ENCODE measurements at regions of chr3 and their contacts with region 1.

Region 1: GRCh38 chr3:23565041-23565775 is 240.5 kb upstream of the UBE2E1 start:
- DNase-seq: peak; percentile 44
- ATAC-seq: peak; percentile 47
- H3K4me3 ChIP-seq: no peak overlapping the region
- H3K27ac ChIP-seq: 0 out of 2 replicates have a peak overlapping the region, but pooled peaks have one; percentile 3
- H3K4me1 ChIP-seq: peaks cover 25% of the 10 kb centered on the region
- H3K27me3 ChIP-seq: no peaks in the 10 kb centered on the region
- CTCF ChIP-seq: no peak

Region 2: GRCh38 chr3:21839592-21839991 is 1725.6 kb before region 1 on chr3:
- CTCF ChIA-PET with region 1: no interaction called
- POLR2A ChIA-PET with region 1: no interaction called
- intact Hi-C with region 1: no loop called
- DNase-seq: peak; percentile 68
- ATAC-seq: 0 out of 2 replicates have a peak, but pooled peaks have one; percentile 18
- H3K4me3 ChIP-seq: no peak overlapping the region
- H3K27ac ChIP-seq: no peak overlapping the region
- H3K4me1 ChIP-seq: peaks cover 9% of the 10 kb centered on the region; the same call in 1 of the 2 replicates
- H3K27me3 ChIP-seq: no peaks in the 10 kb centered on the region
- CTCF ChIP-seq: peak; percentile 71

Region 3: DNA sequence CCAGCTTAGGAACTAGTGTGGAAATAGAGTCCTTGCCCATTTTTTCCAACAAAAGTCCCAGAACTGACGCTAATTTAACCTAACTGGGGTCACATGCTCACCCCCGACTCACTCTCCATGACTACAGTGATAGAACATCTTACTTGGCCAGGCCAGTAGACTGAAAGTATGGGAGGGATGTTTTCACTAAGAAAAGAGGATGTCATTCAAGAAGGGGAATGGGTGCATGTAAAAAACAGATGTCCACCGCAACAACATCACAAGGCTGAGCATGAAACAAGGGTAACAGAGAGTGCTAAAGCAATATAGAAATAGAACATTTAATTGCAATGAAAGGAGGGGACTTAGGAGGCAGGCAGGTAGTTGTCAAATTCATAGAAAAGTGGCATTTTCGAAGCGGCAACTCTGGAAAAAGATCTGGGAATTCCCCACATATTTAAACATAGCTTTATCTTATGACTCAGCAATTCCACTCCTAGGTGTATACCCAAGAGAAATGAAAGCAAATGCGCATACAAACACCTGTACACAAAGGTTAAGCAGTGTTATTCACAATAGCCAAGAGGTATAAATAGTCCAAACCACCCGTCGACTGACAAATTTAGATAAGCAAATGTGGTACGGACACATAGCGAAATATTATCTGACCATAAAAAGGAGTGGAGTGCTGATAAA is 403.2 kb before region 1 on chr3:
- CTCF ChIA-PET with region 1: interaction called, 16 read pairs
- POLR2A ChIA-PET with region 1: no interaction called
- intact Hi-C with region 1: no loop called
- DNase-seq: peak; percentile 73
- ATAC-seq: peak; percentile 67
- H3K4me3 ChIP-seq: peak overlapping the region; percentile 38
- H3K27ac ChIP-seq: peak overlapping the region; percentile 37
- H3K4me1 ChIP-seq: peaks cover 43% of the 10 kb centered on the region
- H3K27me3 ChIP-seq: no peaks in the 10 kb centered on the region
- CTCF ChIP-seq: no peak

Region 4: DNA sequence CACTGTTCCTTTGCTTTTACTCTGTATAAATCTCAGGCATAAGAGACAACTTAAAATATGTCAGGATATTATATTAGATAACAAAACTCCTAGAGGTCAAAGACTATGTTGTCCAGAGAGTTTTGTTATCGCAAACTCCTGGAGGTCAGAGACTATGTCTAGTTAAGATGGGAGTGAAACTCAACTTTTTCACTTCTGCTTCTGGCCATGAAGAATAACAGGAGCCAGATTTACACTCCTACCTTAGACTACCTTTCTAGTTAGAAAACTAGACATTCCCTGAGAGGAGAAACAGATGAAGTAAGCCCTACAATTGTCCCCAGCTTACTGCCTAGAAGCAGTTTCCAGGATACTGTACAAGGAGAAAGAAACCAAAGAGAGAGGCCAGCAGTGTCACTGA is 14.8 kb before region 1 on chr3:
- CTCF ChIA-PET with region 1: no interaction called
- POLR2A ChIA-PET with region 1: no interaction called
- intact Hi-C with region 1: no loop called
- DNase-seq: no peak
- ATAC-seq: no peak
- H3K4me3 ChIP-seq: no peak overlapping the region
- H3K27ac ChIP-seq: no peak overlapping the region
- H3K4me1 ChIP-seq: peaks cover 15% of the 10 kb centered on the region
- H3K27me3 ChIP-seq: no peaks in the 10 kb centered on the region
- CTCF ChIP-seq: no peak

Region 5: DNA sequence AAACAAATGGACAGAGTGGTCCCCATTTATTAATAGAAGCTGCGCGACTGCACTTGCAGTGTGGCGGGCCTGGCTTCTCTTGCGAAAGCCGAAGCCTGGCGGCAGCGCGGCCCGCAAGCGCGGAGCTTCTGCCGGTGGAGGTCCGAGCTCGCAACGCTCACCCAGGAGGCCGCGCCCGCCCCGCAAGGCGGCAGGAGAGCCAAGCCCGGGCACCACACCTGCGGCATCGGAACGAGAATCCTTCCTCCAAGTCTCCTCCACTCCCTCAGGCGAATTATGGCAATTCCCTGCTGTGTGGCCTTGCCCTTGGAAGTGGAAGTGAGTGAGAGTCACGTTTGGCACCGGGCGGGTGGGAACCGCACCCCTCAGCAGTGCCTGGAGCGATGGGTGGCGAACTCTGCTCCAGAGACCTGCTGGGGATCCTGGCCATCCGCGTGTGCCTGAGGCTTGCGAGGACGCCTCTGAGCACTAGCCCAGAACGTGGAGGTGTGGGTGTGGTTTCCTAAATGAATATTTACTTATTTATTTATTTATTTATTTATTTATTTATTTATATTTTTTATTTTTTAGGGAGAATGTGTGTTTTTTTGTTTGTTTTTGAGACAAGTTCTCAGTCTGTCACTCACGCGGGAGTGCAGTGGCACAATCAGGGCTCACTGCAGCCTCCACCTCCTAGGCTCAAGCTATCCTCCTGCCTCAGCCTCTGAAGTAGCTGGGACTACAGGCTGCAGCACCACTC is 106.8 kb after region 1 on chr3:
- CTCF ChIA-PET with region 1: no interaction called
- POLR2A ChIA-PET with region 1: no interaction called
- intact Hi-C with region 1: no loop called
- DNase-seq: peak; percentile 68
- ATAC-seq: peak; percentile 2; the same call in 1 of the 2 replicates
- H3K4me3 ChIP-seq: peak overlapping the region; percentile 62
- H3K27ac ChIP-seq: no peak overlapping the region
- H3K4me1 ChIP-seq: peaks cover 46% of the 10 kb centered on the region
- H3K27me3 ChIP-seq: no peaks in the 10 kb centered on the region
- CTCF ChIP-seq: no peak

Measured in PC-3 (cell line).